ENCODE measurements at regions of chr13 and their contacts with region 1.

Region 1: DNA sequence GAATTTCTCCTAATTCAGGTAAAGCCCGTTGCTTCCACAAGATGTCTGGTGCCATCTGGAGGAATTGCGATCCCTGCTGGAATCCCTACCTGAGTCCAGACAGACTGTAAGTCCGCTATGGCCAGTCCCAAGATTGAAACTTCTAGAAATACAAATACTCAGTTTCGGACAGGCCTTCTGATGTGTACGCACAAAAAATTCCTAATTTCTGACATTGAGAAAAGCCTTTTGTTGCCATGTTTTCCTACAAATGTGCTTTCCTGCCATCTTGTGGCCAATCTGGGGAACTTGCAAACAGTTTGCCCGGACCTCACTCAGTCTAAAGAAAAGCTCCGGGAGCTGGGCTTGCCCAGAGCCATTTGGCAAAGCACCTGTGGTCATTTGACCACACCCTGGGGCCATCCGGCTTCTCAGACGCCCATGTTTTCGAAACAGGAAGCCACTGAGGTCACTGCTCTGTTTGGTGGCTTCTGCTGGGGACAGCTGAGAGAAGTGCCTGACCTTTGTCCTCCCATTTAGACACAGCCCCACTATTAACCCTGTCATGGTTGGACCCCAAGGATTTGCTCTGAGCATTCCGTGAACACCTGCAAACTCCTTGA is 79.4 kb downstream of the SLC15A1 start:
- DNase-seq: peak; percentile 21 to 81
- H3K4me3 ChIP-seq: no peak overlapping the region
- H3K27ac ChIP-seq: no peak overlapping the region
- H3K4me1 ChIP-seq: peaks cover 2 to 4% of the 10 kb centered on the region in 2 donors
- H3K27me3 ChIP-seq: no peaks in the 10 kb centered on the region
- CTCF ChIP-seq: peak; percentile 76 to 86 (median 78)

Region 2: DNA sequence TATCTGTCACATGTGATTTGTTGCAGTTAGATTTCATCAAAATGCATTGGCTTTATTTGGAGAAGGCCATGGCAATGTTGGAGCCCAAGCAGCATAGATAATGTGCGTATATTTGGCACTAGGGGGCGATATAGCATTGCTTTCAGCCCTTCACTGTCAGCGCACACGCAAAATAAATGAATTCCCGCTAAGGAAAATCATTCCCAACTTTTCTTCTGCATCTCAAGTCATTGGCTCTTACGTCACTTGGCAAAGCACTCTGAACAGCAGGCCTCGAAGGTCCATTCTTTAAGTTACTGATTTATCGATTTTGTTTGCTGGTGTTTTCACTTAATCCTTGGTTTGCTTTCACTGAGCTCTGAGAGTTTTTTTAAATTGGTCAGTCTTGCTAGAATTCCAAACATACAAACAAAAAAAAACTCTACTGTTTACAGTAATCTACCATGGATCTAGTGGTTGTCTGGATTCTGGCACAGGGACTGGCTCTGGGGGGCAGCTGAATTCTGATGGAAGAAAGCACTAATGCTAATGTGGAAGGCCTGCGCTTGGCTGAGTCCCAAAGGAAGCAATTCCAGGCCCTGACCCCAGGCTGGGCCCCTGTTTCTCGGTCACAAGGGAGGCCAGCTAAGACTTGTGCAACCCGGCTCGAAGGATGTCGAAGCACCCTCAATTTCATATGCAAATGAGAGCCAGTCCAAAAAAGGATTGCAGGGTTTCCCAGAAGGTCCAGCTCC is 817.3 kb before region 1 on chr13:
- intact Hi-C with region 1: loop called (anchors 10 kb)
- DNase-seq: no peak
- H3K4me3 ChIP-seq: no peak overlapping the region
- H3K27ac ChIP-seq: no peak overlapping the region
- H3K4me1 ChIP-seq: peaks cover 0 to 2% of the 10 kb centered on the region in 2 donors
- H3K27me3 ChIP-seq: no peaks in the 10 kb centered on the region
- CTCF ChIP-seq: peak; percentile 40 to 68 (median 59)

Region 3: DNA sequence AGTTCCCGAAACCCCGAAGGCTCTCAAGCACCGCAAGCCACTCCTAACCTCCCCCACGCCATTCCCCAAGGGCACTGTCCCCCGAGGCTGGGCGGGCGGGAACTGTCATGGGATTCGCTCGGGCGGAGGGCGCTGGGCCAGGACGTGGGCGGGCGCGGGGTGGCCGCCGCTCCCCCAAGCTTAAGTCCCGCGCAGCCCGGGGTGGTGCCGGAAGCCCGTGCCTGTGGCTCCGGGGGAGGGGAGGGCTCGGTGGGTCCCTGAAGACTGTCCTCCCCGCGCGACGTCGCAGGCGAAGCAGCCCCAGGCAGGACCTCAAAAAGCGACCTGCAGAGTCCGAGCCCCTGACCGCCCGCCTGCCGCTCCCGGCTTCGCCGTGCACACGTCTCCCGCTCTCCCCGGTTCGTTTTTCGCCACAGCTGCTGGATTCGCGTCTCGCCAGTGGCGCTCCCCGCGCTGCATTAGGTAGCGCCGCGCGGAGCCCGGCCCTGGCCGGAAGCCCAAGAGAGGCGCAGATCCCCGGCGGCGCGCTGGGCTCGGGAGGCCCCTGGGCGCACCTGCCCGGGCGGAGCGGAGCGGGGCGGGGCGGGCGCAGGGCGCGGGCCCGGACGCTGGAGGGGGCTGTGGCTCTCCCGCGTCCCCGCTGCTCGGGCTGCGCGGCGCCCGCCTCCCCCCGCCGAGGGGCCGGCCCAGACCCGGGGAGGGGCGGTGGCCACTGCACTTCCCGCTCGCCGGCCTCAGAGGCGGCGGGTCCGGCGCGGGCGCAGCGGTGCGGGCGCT is 530.5 kb before region 1 on chr13 and contains the start of gene FARP1:
- intact Hi-C with region 1: loop called (anchors 10 kb)
- DNase-seq: peak in 1 of 2 donors; percentile 79
- H3K4me3 ChIP-seq: peak within 1 kb of the TSS; percentile 73 to 85
- H3K27ac ChIP-seq: peak within 1 kb of the TSS in 1 of 2 donors; percentile 39
- H3K4me1 ChIP-seq: peaks cover 4 to 10% of the 10 kb centered on the region in 2 donors
- H3K27me3 ChIP-seq: no peaks in the 10 kb centered on the region
- CTCF ChIP-seq: peak in 1 of 3 experiments; percentile 57
- total RNA-seq, gene FARP1: 80.8 TPM

Region 4: GRCh38 chr13:98445340-98446233 is 227.5 kb before region 1 on chr13:
- intact Hi-C with region 1: loop called (anchors 5 kb)
- DNase-seq: peak in 1 of 2 donors; percentile 81
- H3K4me3 ChIP-seq: no peak overlapping the region
- H3K27ac ChIP-seq: no peak overlapping the region
- H3K4me1 ChIP-seq: peaks cover 2 to 9% of the 10 kb centered on the region in 2 donors
- H3K27me3 ChIP-seq: no peaks in the 10 kb centered on the region
- CTCF ChIP-seq: peak; percentile 91 to 96 (median 95)

Region 5: DNA sequence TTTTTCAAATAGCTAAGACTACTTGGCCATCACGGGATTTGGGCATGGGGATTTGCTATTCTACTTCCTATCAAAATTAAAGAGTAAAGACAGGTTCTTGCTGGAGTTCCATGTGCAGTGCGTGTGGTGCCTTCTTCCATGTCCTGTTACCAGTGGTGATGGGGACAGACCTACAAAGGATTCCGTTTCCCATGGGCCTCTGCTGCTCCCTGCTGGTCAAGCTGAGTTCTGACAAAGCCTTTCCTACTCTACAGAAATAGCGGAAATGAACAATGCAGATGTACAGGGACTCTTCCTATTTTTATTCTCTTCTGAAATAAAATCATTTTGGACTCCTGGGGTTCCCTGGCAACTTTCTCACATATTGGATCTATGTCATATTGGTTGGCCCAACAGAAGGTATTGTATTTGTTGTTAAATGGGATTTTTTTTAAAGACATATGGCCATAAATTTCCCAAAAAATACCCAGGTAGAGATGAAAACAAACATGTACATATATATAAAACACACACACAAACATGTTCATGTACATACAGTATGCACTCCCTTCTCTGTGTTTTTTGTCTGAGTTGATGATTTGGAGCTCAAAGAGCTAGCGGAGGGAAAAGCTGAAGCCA is 169.9 kb after region 1 on chr13:
- intact Hi-C with region 1: loop called (anchors 10 kb)
- DNase-seq: no peak
- H3K4me3 ChIP-seq: no peak overlapping the region
- H3K27ac ChIP-seq: no peak overlapping the region
- H3K4me1 ChIP-seq: peaks cover 0 to 4% of the 10 kb centered on the region in 2 donors
- H3K27me3 ChIP-seq: no peaks in the 10 kb centered on the region
- CTCF ChIP-seq: peak; percentile 46 to 86 (median 81)

Measured in ascending aorta (tissue), 2 donors.